ENCODE measurements at regions of chr1 and their contacts with region 1.

Region 1: DNA sequence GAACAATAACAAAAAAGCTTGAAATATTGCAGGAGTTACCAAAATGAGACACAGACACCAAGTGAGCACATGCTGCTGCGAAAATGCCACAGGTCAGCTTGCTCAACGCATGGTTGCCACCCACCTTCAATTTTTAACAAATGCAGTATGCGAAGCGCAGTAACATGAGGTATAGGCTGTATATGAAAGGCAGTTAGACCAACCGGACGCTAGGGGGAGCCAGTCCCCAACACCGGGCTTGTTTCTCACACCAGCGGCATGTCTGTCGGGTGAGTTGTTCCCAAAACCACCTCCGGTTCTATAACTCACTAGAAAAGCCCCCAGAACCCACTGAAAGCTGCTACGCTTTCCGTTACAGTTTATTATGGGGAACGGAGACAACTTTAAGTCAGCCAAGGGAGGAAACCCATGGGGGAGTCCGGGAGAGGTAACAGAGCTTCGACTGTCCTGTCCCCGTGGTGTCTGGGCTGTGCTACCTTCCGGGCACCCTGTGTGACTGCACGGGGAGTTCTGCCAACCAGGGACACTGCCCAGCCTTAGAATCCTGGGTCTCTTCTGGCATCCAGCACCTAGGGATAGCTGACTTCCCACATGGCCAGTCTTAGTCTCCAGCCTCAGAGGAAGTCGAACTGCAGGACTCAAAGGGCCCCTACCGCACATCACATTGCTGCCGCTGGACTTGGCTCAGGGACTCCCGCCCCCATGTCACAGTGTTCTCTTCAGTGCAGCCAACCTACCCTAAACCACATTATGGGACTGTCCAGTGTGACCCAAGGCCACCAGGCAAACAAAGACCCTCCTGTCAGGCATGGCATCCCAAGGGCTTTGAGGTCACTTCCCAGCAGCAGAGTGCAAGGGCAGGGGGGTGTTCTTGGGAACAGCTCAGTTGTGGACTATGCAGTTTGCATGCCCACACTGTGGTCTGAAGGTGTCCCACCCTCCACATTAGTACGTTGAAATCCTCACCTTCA is 14.0 kb downstream of the RNF187 start:
- DNase-seq: peak; percentile 91
- H3K4me3 Mint-ChIP-seq: peak overlapping the region; percentile 61
- H3K27ac Mint-ChIP-seq: peak overlapping the region; percentile 70
- H3K4me1 Mint-ChIP-seq: peaks cover 25% of the 10 kb centered on the region
- H3K27me3 Mint-ChIP-seq: peaks cover 21% of the 10 kb centered on the region

Region 2: DNA sequence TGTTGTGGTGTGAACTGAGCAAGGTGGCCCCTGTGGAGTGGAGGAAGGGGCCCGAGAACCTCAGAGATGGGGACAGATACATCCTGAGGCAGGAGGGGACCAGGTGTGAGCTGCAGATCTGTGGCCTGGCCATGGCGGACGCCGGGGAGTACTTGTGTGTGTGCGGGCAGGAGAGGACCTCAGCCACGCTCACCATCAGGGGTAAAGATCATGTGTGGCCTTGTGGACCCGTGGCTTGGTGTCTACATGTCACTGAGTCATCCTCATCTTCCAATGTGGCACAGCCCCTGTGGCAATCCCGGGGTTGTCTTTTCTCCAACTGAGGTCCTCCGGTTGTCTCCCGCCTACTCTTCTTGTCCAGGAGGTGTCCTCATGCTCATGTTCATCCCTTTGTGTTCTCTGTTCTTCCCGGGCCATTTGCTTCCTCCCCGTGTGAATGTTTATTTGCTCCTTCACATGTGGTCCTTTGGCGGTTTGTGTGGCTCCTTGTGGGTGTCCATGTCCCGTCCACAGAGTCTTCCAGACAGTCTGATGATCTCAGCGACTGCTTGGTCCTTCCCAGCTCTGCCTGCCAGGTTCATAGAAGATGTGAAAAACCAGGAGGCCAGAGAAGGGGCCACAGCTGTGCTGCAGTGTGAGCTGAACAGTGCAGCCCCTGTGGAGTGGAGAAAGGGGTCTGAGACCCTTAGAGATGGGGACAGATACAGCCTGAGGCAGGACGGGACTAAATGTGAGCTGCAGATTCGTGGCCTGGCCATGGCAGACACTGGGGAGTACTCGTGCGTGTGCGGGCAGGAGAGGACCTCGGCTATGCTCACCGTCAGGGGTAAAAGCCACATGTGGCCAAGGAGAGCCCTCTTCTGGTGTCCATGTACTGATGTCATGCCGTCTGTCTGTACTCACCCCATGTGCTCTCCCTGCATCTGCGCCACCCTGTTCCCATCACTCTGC is 208.9 kb before region 1 on chr1:
- CTCF ChIA-PET with region 1: no interaction called
- DNase-seq: no peak
- H3K4me3 Mint-ChIP-seq: no peak overlapping the region
- H3K27ac Mint-ChIP-seq: no peak overlapping the region
- H3K4me1 Mint-ChIP-seq: peaks cover 2% of the 10 kb centered on the region
- H3K27me3 Mint-ChIP-seq: no peaks in the 10 kb centered on the region

Region 3: GRCh38 chr1:228457396-228458176 is 43.6 kb before region 1 on chr1:
- CTCF ChIA-PET with region 1: interaction called, 13 read pairs
- DNase-seq: peak; percentile 92
- H3K4me3 Mint-ChIP-seq: peak overlapping the region; percentile 89
- H3K27ac Mint-ChIP-seq: peak overlapping the region; percentile 99
- H3K4me1 Mint-ChIP-seq: peaks cover 65% of the 10 kb centered on the region
- H3K27me3 Mint-ChIP-seq: peaks cover 9% of the 10 kb centered on the region

Region 4: GRCh38 chr1:228515200-228515834 is 14.1 kb after region 1 on chr1:
- CTCF ChIA-PET with region 1: interaction called, 23 read pairs
- DNase-seq: peak; percentile 50
- H3K4me3 Mint-ChIP-seq: no peak overlapping the region
- H3K27ac Mint-ChIP-seq: no peak overlapping the region
- H3K4me1 Mint-ChIP-seq: peaks cover 16% of the 10 kb centered on the region
- H3K27me3 Mint-ChIP-seq: peaks cover 48% of the 10 kb centered on the region

Region 5: DNA sequence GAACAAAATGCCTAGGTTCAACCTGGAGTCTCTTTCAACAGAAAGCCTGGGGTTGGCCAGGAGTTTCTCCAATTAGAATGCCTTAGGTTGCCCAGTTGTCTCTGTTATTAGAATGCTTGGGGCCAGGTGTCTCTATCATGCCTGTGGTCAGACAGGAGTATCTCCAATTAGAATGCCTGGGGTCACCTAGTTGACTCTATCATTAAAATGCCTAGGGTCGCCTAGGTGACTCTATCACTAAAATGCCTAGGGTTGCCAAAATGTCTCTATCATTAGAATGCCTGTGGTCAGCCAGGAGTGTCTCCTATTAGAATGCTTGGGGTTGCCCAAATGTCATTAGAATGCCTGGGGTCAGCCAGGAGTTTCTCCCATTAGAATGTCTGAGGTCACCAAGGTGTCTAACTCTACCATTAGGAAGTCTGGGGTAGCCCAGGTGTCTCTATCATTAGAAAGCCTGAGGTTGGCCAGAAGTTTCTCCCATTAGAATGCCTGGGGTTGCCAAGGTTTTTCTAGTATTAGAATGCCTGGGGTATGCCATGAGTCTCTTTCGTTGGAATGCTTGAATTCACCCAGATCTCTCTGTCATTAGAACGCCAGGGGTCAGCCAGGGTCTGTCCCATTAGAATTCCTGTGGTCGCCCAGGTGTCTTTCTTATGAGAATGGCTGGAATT is 43.9 kb after region 1 on chr1:
- CTCF ChIA-PET with region 1: no interaction called
- DNase-seq: no peak
- H3K4me3 Mint-ChIP-seq: no peak overlapping the region
- H3K27ac Mint-ChIP-seq: no peak overlapping the region
- H3K4me1 Mint-ChIP-seq: no peaks in the 10 kb centered on the region
- H3K27me3 Mint-ChIP-seq: no peaks in the 10 kb centered on the region

Region 6: DNA sequence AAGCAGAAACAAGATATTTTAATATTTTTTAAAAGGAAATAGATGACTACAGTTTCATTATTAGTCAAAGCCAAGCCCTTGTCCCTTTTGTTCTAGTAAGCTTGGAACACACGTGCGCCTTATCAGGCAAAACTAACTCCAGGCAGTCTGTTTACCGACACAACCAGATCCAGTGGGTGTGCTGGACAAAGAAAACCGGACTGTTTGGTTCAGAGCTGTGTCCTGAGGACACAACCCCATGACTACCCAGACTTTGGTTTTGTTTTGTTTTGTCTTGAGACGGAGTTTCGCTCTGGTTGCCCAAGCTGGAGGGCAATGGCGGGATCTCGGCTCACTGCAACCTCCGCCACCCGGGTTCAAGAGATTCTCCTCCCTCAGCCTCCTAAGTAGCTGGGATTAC is 220.2 kb after region 1 on chr1:
- CTCF ChIA-PET with region 1: no interaction called
- DNase-seq: no peak
- H3K4me3 Mint-ChIP-seq: no peak overlapping the region
- H3K27ac Mint-ChIP-seq: no peak overlapping the region
- H3K4me1 Mint-ChIP-seq: no peaks in the 10 kb centered on the region
- H3K27me3 Mint-ChIP-seq: no peaks in the 10 kb centered on the region